PC-9 (cell line): ENCODE measurements at regions of chr4 and their contacts with region 1.

Region 1: GRCh38 chr4:123396307-123397143 is at the start of gene SPRY1:
- DNase-seq: peak; percentile 83 to 92
- H3K4me3 ChIP-seq: peak within 1 kb of the TSS; percentile 86
- H3K27ac ChIP-seq: peak within 1 kb of the TSS; percentile 83
- H3K4me1 ChIP-seq: peaks cover 17% of the 10 kb centered on the region
- H3K27me3 ChIP-seq: no peaks in the 10 kb centered on the region
- CTCF ChIP-seq: no peak
- total RNA-seq, gene SPRY1: 13.1 and 18.3 TPM in 2 replicates

Region 2: GRCh38 chr4:123418351-123418931 is 21.9 kb after region 1 on chr4:
- CTCF ChIA-PET with region 1: no interaction called
- POLR2A ChIA-PET with region 1: interaction called, 3 read pairs
- intact Hi-C with region 1: loop called (anchors 1 kb)
- DNase-seq: peak; percentile 70 to 99
- H3K4me3 ChIP-seq: peak overlapping the region; percentile 16; the same call in 1 of the 2 replicates
- H3K27ac ChIP-seq: peak overlapping the region; percentile 90
- H3K4me1 ChIP-seq: peaks cover 71% of the 10 kb centered on the region
- H3K27me3 ChIP-seq: no peaks in the 10 kb centered on the region
- CTCF ChIP-seq: no peak

Region 3: GRCh38 chr4:123547216-123548165 is 151.0 kb after region 1 on chr4:
- CTCF ChIA-PET with region 1: interaction called, 8 read pairs
- POLR2A ChIA-PET with region 1: interaction called, 4 read pairs
- intact Hi-C with region 1: loop called (anchors 1 kb)
- DNase-seq: peak; percentile 86 to 93
- H3K4me3 ChIP-seq: peak overlapping the region; percentile 20; the same call in 1 of the 2 replicates
- H3K27ac ChIP-seq: peak overlapping the region; percentile 47
- H3K4me1 ChIP-seq: peaks cover 30% of the 10 kb centered on the region
- H3K27me3 ChIP-seq: no peaks in the 10 kb centered on the region
- CTCF ChIP-seq: no peak

Region 4: GRCh38 chr4:123588631-123589241 is 192.2 kb after region 1 on chr4:
- CTCF ChIA-PET with region 1: interaction called, 3 read pairs
- POLR2A ChIA-PET with region 1: no interaction called
- intact Hi-C with region 1: loop called (anchors 1 kb)
- DNase-seq: no peak
- H3K4me3 ChIP-seq: no peak overlapping the region
- H3K27ac ChIP-seq: peak overlapping the region; percentile 67
- H3K4me1 ChIP-seq: peaks cover 28% of the 10 kb centered on the region
- H3K27me3 ChIP-seq: no peaks in the 10 kb centered on the region
- CTCF ChIP-seq: no peak